ENCODE measurements at regions of chr14 and their contacts with region 1.

Region 1: DNA sequence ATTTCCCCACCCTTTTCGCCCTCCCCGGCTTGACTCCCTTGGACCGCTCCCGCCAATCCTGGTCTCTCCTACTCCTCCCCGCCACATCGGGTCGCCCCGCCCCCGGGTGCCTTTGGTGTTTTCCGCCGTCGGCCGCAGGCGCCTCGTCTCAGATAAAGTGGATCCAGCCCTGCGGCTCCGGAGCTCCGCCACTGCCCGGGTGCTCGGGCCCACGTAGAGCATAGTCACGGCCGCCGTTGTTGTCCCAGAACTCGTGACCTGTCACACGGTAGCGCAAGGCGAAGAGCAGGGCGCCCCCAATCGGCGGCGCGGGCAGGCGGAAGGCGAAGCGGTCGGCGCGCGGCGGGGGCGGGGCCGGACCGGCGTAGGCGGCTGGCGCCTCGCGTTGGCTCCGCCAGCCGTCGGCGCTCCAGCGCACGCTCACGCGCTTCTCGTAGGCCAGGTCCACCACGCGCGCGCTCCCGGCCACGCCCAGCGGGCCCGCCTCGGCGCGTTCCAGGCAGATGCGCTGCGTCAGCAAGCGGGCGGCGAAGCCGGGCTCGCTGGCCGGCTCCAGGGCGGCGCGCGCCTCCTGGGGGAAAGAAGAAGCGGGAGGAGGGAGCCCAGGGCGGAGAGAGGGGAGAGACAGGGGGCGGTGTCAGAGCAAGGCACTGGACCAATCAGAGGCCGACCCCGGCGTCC is 1.2 kb downstream of the PPP1R3E start:
- DNase-seq: peak; percentile 100
- H3K4me3 Mint-ChIP-seq: peak overlapping the region; percentile 98
- H3K27ac Mint-ChIP-seq: peak overlapping the region; percentile 99
- H3K4me1 Mint-ChIP-seq: peaks cover 30% of the 10 kb centered on the region
- H3K27me3 Mint-ChIP-seq: peaks cover 6% of the 10 kb centered on the region

Region 2: DNA sequence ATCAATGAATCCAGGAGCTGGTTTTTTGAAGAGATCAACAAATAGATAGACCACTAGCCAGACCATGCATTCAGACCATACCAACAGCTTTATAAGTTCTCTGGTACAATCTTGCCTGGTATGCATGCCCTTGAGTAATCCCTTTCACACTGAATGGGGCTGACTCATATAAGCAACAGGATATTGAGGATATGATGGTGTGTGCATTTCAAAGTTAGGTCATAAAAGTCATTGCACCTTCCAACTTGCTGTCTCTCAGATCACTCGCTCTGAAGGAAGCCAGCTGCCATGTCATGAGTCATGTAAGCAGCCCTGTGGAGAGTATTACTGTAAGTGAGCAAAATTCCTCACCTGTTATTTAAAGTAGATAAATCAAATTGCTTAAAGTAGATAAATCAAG is 612.2 kb before region 1 on chr14:
- intact Hi-C with region 1: no loop called
- DNase-seq: no peak
- H3K4me3 Mint-ChIP-seq: no peak overlapping the region
- H3K27ac Mint-ChIP-seq: no peak overlapping the region
- H3K4me1 Mint-ChIP-seq: peaks cover 4% of the 10 kb centered on the region
- H3K27me3 Mint-ChIP-seq: peaks cover 20% of the 10 kb centered on the region

Region 3: DNA sequence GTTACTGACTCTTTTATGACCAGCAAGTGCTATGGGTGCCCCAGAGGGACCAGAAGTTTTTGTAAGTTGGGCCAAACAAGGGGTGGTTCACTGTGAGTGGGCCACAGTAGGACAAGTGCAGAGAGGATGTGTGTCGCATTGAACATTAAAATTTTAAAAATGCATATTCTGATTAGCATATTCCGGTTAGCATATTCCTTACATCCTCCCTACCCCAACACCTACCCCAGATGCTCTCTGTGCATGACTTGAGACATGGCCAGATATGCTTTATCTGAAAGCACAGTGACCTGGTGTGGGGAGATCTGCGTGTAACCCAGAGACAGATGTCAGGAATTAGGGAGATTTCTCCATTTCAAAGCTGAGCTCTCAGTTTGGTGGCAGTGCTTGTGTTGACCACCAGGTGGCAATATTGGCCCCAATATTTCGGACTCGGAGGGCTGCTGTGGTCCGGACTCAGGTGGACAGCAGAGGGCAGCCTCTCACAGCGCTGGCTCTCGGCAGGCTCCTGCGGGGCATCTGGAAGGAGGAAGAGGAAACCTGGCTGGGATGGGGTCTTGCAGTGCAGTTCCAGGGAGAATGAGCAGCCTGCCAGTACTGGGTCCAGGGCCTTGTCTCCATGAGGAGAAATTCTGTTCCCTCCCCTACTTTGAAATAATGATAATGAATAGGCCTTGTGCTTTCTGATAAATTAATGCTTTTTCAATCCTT is 180.7 kb before region 1 on chr14:
- intact Hi-C with region 1: loop called (anchors 2 kb)
- DNase-seq: peak; percentile 94
- H3K4me3 Mint-ChIP-seq: peak overlapping the region; percentile 16
- H3K27ac Mint-ChIP-seq: peak overlapping the region; percentile 81
- H3K4me1 Mint-ChIP-seq: peaks cover 28% of the 10 kb centered on the region
- H3K27me3 Mint-ChIP-seq: peaks cover 4% of the 10 kb centered on the region

Region 4: DNA sequence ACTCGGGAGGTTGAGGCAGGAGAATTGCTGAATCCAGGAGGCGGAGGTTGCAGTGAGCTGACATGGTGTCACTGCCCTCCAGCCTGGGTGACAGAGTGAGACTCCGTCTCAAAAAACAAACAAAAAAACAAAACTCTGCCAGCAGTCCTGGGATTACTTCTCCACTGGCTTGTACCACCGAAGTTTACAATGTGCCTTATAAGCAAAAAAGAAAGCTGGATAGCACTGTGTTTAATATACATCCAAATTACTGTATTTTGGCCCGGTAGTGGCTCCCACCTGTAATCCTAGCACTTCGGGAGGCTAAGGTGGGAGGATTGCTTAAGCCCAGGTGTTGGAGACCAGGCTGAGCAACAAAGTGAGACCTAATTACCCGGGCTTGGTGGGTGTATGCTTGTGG is 32.2 kb before region 1 on chr14:
- intact Hi-C with region 1: loop called (anchors 1 kb)
- DNase-seq: no peak
- H3K4me3 Mint-ChIP-seq: no peak overlapping the region
- H3K27ac Mint-ChIP-seq: no peak overlapping the region
- H3K4me1 Mint-ChIP-seq: no peaks in the 10 kb centered on the region
- H3K27me3 Mint-ChIP-seq: peaks cover 11% of the 10 kb centered on the region

Region 5: DNA sequence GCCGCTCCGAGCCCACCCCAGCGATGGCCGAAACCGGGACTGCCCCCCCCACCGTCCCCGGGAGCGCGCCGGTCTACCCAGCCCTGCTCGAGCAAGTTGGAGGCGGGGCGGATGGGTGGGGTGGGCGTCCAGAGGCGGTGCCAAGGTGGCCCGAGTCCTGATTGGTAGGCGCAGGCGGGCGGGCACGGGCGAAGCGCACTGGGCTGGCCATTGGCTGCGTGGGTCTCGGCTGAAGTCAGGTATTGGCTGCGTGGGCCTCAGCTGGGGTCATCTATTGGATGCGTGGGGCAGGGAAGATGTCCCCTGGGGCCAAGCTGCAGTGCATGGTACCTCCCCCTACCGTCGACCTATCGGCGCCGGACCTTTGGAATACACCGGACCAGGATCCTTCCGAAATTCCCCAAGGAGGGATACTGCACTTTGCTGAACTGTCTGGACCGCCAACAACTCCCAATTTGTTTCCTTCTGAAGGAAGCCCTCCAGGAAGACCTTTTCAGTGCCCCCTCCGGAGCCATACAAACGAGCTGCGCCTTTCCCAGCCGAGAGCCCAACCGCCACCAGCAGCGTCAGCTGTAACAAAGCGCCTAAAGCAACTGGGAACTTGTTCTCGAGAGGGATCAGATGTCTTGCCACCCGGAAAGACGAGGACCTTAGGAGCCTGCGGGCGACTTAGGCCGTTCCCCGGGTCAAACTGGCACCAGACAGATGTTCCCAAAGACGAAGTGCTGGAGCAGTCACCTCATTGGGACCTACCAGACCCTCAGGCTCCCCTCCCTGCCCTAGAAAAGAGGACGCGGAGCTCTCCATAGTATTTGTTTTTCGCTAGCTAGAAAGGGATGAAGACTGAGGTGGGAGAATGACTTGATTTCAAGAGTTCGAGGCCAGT is 15.2 kb before region 1 on chr14 and contains the start of gene HOMEZ:
- intact Hi-C with region 1: loop called (anchors 1 kb)
- DNase-seq: peak; percentile 99
- H3K4me3 Mint-ChIP-seq: peak within 1 kb of the TSS; percentile 99
- H3K27ac Mint-ChIP-seq: peak within 1 kb of the TSS; percentile 94
- H3K4me1 Mint-ChIP-seq: peaks cover 20% of the 10 kb centered on the region
- H3K27me3 Mint-ChIP-seq: no peaks in the 10 kb centered on the region
- total RNA-seq, gene HOMEZ: 12.9 and 13.5 TPM in 2 replicates

Region 6: DNA sequence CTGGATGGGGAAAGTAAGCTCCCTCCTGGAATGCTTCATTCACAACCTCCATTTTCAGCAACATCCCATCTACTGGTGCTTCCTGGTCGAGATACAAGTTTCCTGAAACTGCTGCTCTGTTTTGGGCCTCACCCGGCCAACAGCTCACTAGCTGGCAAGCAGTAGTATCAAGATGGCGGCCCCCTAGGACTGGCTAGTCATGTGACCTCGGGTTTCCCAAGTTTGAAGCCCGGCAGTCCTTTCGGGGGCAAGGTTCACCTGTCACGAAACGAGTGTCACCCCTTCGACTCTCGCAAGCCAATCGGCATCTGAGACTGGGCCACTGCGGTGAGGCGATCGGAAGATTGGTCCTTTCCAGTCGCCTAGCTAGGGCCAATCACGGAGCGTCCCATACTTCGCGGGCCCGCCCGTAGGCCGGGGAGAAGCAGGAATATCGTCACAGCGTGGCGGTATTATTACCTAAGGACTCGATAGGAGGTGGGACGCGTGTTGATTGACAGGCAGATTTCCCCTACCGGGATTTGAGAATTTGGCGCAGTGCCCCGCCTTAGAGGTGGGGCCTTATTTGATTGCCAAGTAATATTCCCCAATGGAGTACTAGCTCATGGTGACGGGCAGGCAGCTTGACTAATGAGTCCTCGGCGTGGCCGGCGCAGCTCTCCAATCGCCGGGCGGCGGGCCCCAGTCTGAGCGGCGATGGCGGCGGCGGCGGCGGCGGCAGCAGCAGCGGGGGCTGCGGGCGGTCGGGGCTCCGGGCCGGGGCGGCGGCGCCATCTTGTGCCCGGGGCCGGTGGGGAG is 19.5 kb after region 1 on chr14 and contains the start of gene PABPN1:
- intact Hi-C with region 1: loop called (anchors 1 kb)
- DNase-seq: peak; percentile 99
- H3K4me3 Mint-ChIP-seq: peak within 1 kb of the TSS; percentile 90
- H3K27ac Mint-ChIP-seq: peak within 1 kb of the TSS; percentile 98
- H3K4me1 Mint-ChIP-seq: peaks cover 24% of the 10 kb centered on the region
- H3K27me3 Mint-ChIP-seq: no peaks in the 10 kb centered on the region
- total RNA-seq, gene PABPN1: 277 and 278 TPM in 2 replicates

Region 7: DNA sequence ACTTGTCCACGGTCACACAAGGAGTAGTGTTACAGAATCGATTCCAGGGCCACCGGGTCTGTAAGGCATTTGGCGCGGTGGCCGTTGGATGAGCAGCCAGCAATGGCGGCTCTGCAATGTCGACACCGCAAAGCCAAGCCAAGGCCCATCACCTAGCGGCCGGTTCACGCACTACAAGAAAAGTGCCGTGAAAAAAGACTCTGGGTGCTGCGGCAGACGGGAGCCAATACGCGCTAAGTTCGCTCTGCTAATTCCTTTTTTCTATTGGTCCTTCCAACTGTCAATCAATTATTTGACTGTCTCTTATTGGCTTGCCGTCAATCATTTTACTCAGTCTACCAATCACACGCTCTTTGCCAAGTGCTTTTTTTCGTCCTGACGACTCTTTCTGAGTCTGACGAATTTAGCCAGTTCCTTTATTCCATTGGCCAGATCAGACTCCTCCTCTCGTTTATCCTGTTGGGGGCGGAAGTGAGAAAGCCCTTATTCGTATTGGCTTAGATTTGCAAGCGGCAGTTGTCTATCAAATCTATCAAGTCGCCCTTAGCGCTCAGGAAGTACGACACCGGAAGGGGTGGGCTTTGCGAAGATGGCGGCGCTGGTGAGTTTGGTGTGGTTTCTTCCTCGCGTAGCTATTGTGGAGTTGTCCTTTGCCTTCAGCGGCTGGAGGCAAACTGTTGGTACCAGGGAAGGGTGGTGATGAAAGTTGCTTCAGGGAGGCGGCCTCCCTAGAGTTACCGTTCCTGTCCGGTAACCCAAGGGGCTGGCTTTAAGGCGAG is 167.9 kb after region 1 on chr14 and contains the start of gene NGDN:
- intact Hi-C with region 1: loop called (anchors 1 kb)
- DNase-seq: peak; percentile 98
- H3K4me3 Mint-ChIP-seq: no peak within 1 kb of the TSS
- H3K27ac Mint-ChIP-seq: no peak within 1 kb of the TSS
- H3K4me1 Mint-ChIP-seq: peaks cover 9% of the 10 kb centered on the region
- H3K27me3 Mint-ChIP-seq: no peaks in the 10 kb centered on the region
- total RNA-seq, gene NGDN: 78.6 and 79.2 TPM in 2 replicates

Measured in activated CD4-positive, alpha-beta T cell treated with anti-CD3 and anti-CD28 coated beads, Interleukin-2, amount 10 ng/mL, durations not matched to agents 24 days and 14 days (primary cell).